ENCODE measurements at regions of chr4 and their contacts with region 1.

Region 1: GRCh38 chr4:21765810-21766407 is 182.7 kb downstream of the KCNIP4 start:
- DNase-seq: no peak
- H3K4me3 ChIP-seq: no peak overlapping the region
- CTCF ChIP-seq: peak; percentile 86

Region 2: DNA sequence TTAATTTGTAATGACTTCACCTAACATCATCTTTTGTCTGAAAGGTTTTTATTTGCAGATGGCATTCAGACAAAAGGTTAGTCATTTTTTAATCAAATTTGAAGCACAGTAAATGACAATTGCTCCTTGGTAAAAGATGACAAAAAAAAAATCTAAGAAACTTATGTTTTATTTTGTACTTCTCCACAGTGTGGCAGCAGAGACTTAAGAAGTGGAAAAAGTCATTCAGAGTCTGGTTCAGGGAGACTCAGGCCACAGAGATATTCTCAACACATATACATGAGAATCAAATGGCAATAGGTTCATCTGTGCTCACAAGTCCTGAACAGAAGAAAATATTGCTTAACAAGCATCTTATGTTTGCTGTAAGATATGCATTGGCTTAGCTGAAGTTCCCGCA is 253.6 kb before region 1 on chr4:
- CTCF ChIA-PET with region 1: interaction called, 63 read pairs
- POLR2A ChIA-PET with region 1: no interaction called
- DNase-seq: no peak
- H3K4me3 ChIP-seq: no peak overlapping the region
- CTCF ChIP-seq: no peak

Region 3: GRCh38 chr4:21738821-21739220 is 27.1 kb before region 1 on chr4:
- CTCF ChIA-PET with region 1: no interaction called
- POLR2A ChIA-PET with region 1: no interaction called
- DNase-seq: no peak
- H3K4me3 ChIP-seq: no peak overlapping the region
- CTCF ChIP-seq: no peak

Region 4: GRCh38 chr4:21780158-21780557 is 14.2 kb after region 1 on chr4:
- CTCF ChIA-PET with region 1: interaction called, 11 read pairs
- POLR2A ChIA-PET with region 1: no interaction called
- DNase-seq: no peak
- H3K4me3 ChIP-seq: no peak overlapping the region
- CTCF ChIP-seq: no peak

Region 5: GRCh38 chr4:21879187-21879586 is 113.3 kb after region 1 on chr4:
- CTCF ChIA-PET with region 1: no interaction called
- POLR2A ChIA-PET with region 1: no interaction called
- DNase-seq: no peak
- H3K4me3 ChIP-seq: no peak overlapping the region
- CTCF ChIP-seq: no peak